ENCODE measurements at regions of chr6 and their contacts with region 1.

Region 1: GRCh38 chr6:159742165-159742564 is 14.9 kb downstream of the WTAP start:
- DNase-seq: no peak
- ATAC-seq: no peak
- H3K4me3 ChIP-seq: no peak overlapping the region
- H3K27ac ChIP-seq: no peak overlapping the region
- H3K4me1 ChIP-seq: peaks cover 5% of the 10 kb centered on the region
- H3K27me3 ChIP-seq: no peaks in the 10 kb centered on the region
- CTCF ChIP-seq: no peak
- POLR2A ChIP-seq: no peak

Region 2: GRCh38 chr6:159360306-159360705 is 381.9 kb before region 1 on chr6:
- intact Hi-C with region 1: no loop called
- DNase-seq: no peak
- ATAC-seq: no peak
- H3K4me3 ChIP-seq: no peak overlapping the region
- H3K27ac ChIP-seq: no peak overlapping the region
- H3K4me1 ChIP-seq: no peaks in the 10 kb centered on the region
- H3K27me3 ChIP-seq: no peaks in the 10 kb centered on the region
- CTCF ChIP-seq: no peak
- POLR2A ChIP-seq: no peak

Region 3: GRCh38 chr6:159679091-159680077 is 62.8 kb before region 1 on chr6:
- intact Hi-C with region 1: loop called (anchors 10 kb)
- DNase-seq: no peak
- ATAC-seq: no peak
- H3K4me3 ChIP-seq: no peak overlapping the region
- H3K27ac ChIP-seq: peak overlapping the region in 1 of 4 donors; percentile 54
- H3K4me1 ChIP-seq: peaks cover 24% of the 10 kb centered on the region
- H3K27me3 ChIP-seq: no peaks in the 10 kb centered on the region
- CTCF ChIP-seq: no peak
- POLR2A ChIP-seq: no peak

Region 4: GRCh38 chr6:159929819-159930218 is 187.7 kb after region 1 on chr6:
- intact Hi-C with region 1: no loop called
- DNase-seq: peak; percentile 47 to 63 (median 58)
- ATAC-seq: peak; percentile 36
- H3K4me3 ChIP-seq: no peak overlapping the region
- H3K27ac ChIP-seq: peak overlapping the region in 1 of 4 donors; percentile 22
- H3K4me1 ChIP-seq: peaks cover 25% of the 10 kb centered on the region
- H3K27me3 ChIP-seq: no peaks in the 10 kb centered on the region
- CTCF ChIP-seq: no peak
- POLR2A ChIP-seq: no peak

Region 5: DNA sequence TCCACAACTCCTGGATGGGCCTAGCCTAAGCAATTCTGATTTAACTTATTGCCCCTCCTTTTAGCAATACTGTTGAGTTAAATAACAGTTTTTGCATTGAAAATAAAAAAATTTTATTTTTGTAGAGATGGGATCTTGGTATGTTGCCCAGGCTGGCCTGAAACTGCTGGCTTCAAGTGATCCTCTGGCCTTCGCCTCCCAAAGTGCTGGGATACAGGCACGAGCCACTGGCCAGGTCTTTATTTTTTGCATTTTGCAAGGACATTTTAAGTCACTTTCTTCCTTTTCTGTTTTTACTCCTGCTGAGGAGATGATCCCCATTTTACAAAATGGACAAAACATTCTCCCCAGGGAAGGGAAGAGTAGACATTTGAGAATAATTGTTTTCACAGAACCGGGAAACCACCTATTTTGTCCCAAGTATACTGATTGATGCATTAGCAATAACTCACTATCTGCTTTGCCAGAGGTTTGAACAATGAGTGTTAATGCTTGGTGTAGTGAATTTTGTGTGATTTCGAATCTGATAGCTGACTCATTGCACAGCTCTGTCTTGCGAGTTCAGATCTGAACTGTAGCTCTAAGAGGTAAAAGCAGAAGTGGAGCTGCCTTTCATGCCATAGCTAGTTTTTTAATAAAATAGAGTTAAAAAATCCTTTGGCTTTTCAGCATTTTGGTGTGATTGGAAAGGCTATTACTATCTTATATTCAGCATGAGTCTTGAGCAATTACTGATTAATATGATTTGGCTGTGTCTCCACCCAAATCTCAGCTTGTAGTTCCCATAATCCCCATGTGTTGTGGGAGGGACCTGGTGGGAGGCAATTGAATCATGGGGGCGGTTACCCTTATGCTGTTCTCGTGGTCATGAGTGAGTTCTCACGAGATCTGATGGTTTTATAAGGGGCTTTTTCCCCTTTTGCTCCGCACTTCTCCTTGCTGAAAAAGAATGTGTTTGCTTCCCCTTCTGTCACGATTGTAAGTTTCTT is 247.6 kb after region 1 on chr6:
- intact Hi-C with region 1: no loop called
- DNase-seq: no peak
- ATAC-seq: no peak
- H3K4me3 ChIP-seq: no peak overlapping the region
- H3K27ac ChIP-seq: no peak overlapping the region
- H3K4me1 ChIP-seq: peaks cover 49% of the 10 kb centered on the region
- H3K27me3 ChIP-seq: no peaks in the 10 kb centered on the region
- CTCF ChIP-seq: no peak
- POLR2A ChIP-seq: no peak

Region 6: DNA sequence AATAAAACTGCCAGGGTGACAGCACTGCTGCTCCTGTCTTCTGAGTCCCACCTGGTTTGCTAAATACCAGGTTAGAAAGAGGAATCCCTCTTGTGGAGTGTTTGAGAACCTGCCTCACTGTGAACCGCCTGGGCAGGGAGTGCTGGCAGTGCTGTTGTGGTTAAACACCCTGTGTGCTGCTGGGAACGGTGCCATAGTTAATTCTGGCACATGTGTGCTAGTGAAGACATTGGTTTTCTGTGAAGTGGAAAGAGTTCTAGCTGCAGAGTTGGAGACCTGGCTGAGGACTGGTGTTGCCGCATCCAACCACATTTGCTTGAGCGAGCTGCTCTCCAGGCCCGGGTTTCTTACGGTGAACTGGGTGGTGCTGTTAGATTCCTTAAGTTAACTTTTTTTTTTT is 299.4 kb after region 1 on chr6:
- intact Hi-C with region 1: no loop called
- DNase-seq: peak; percentile 60 to 94 (median 84)
- ATAC-seq: peak; percentile 73
- H3K4me3 ChIP-seq: no peak overlapping the region
- H3K27ac ChIP-seq: peak overlapping the region in 1 of 4 donors; percentile 28
- H3K4me1 ChIP-seq: peaks cover 21% of the 10 kb centered on the region
- H3K27me3 ChIP-seq: no peaks in the 10 kb centered on the region
- CTCF ChIP-seq: peak in 4 of 7 experiments; percentile 35 to 76 (median 54)
- POLR2A ChIP-seq: no peak

Measured in body of pancreas (tissue), 4 donors.